Activated B cell treated with CpG ODN at 0.5 μM for 24 hours (primary cell): ENCODE measurements at regions of chr20 and their contacts with region 1.

Region 1: GRCh38 chr20:47886460-47887041 is 101.3 kb upstream of the SULF2 start:
- DNase-seq: no peak
- ATAC-seq: no peak
- H3K4me3 Mint-ChIP-seq: no peak overlapping the region
- H3K27ac Mint-ChIP-seq: no peak overlapping the region
- H3K4me1 Mint-ChIP-seq: no peaks in the 10 kb centered on the region
- H3K27me3 Mint-ChIP-seq: peaks cover 8% of the 10 kb centered on the region
- CTCF ChIP-seq: no peak

Region 2: GRCh38 chr20:47740862-47741184 is 145.7 kb before region 1 on chr20:
- CTCF ChIA-PET with region 1: no interaction called
- POLR2A ChIA-PET with region 1: no interaction called
- intact Hi-C with region 1: no loop called
- DNase-seq: no peak
- ATAC-seq: no peak
- H3K4me3 Mint-ChIP-seq: no peak overlapping the region
- H3K27ac Mint-ChIP-seq: no peak overlapping the region
- H3K4me1 Mint-ChIP-seq: peaks cover 3% of the 10 kb centered on the region
- H3K27me3 Mint-ChIP-seq: peaks cover 14% of the 10 kb centered on the region
- CTCF ChIP-seq: no peak

Region 3: DNA sequence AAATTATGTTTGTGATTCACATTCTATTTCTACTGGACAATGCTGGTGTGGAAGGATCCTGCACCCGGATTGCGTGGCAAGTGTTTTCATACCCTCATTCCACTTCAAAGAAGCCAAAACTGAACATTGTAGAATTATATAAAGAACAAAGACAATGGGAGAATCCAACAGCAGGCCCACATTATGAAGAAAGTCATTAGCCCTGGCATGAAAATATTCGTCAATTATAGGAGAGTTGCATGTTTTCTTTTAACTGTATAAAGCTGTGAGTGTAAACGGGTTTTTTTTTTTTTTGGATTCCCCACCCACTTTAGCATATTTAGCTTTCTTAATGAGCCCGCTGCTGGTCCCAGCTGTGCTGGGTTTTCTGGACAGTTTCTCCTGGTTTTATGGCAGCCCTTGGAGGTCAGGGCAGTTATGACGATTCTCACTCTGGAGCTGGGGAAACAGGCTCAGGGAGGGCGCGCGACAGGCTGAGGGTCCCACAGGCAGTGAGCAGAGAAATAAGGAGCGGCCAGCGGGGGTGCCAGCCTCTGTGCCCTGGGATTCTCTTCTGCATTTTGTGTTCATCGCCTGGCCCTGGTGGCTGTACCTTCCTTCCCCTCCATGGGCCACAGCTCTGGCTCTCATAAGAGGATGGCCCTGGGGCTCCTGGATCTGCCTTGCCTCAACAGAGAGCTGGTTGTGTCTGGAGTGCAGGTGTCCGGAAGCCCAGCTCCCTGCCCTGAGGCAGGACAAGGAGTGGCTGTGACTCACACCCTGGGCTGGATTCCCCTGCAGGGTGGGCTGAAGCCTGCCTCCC is 77.2 kb before region 1 on chr20:
- CTCF ChIA-PET with region 1: no interaction called
- POLR2A ChIA-PET with region 1: no interaction called
- intact Hi-C with region 1: no loop called
- DNase-seq: no peak
- ATAC-seq: no peak
- H3K4me3 Mint-ChIP-seq: no peak overlapping the region
- H3K27ac Mint-ChIP-seq: no peak overlapping the region
- H3K4me1 Mint-ChIP-seq: no peaks in the 10 kb centered on the region
- H3K27me3 Mint-ChIP-seq: peaks cover 38% of the 10 kb centered on the region
- CTCF ChIP-seq: no peak

Region 4: DNA sequence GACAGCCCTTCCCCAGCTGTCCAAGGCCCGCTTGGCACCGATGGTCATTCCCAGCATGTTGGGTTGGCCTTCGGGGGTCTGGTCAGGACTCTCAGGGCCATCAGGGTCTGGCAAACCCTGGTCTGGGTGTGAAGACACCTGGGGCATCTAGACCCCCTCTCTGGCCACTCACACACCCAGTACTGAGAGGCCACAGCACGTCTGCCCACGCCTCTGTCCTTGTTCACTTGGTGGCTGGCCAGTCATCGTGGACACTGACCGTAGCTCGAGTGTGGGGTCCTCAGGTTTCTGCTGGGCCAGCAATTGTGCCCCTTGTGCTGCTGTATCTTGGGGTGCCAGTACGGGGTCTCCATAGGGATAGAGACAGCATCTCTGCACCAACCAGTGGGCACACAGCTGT is 47.4 kb before region 1 on chr20:
- CTCF ChIA-PET with region 1: no interaction called
- POLR2A ChIA-PET with region 1: no interaction called
- intact Hi-C with region 1: loop called (anchors 5 kb)
- DNase-seq: no peak
- ATAC-seq: no peak
- H3K4me3 Mint-ChIP-seq: no peak overlapping the region
- H3K27ac Mint-ChIP-seq: no peak overlapping the region
- H3K4me1 Mint-ChIP-seq: no peaks in the 10 kb centered on the region
- H3K27me3 Mint-ChIP-seq: peaks cover 3% of the 10 kb centered on the region
- CTCF ChIP-seq: no peak

Region 5: DNA sequence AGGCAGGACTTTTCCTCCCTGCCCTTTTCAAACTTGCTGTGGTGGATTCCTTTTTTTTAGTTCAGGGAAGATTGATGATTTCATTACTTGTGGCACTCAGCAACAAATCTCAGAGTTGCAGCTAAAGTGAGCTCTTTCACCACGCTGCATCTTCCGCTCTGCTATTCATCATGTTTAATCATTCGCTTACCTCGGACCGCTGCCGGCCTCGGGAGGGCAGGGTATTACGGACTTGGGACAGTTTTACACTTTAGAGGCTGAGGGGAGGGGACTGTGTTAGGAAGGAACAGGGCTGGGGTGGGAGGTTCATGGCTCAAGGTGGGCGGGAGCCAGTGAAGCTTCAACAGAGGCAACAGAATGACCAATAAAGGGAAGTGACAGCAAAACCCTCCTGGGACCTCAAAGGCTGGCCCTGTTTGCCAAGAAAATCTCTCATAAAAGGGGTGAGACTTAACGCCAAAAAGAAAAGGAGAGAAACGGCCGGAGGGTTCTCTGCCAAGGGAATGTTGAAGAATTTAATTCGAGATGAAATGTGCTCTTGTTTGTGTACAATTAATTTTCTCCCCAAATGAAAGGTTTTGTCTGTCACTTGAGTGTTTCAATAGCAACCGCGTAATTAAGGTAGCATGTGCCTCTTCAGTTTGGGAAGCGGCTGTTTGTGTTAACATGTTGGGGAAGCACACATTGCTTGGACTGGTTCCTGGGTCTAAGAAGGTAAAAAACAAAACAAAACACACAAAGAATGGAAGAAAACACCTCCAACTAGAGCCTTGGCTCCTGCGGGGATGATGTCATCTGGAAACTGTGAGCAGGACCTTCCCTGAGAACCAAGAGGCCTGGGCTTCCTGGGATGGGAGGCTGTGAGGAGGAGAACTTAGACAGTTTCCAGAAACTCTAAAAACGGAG is 28.7 kb before region 1 on chr20:
- CTCF ChIA-PET with region 1: no interaction called
- POLR2A ChIA-PET with region 1: no interaction called
- intact Hi-C with region 1: no loop called
- DNase-seq: no peak
- ATAC-seq: no peak
- H3K4me3 Mint-ChIP-seq: no peak overlapping the region
- H3K27ac Mint-ChIP-seq: no peak overlapping the region
- H3K4me1 Mint-ChIP-seq: peaks cover 13% of the 10 kb centered on the region
- H3K27me3 Mint-ChIP-seq: no peaks in the 10 kb centered on the region
- CTCF ChIP-seq: no peak

Region 6: GRCh38 chr20:47914792-47915191 is 28.2 kb after region 1 on chr20:
- CTCF ChIA-PET with region 1: no interaction called
- POLR2A ChIA-PET with region 1: no interaction called
- intact Hi-C with region 1: no loop called
- DNase-seq: no peak
- ATAC-seq: no peak
- H3K4me3 Mint-ChIP-seq: no peak overlapping the region
- H3K27ac Mint-ChIP-seq: no peak overlapping the region
- H3K4me1 Mint-ChIP-seq: peaks cover 7% of the 10 kb centered on the region
- H3K27me3 Mint-ChIP-seq: peaks cover 11% of the 10 kb centered on the region
- CTCF ChIP-seq: no peak

Region 7: DNA sequence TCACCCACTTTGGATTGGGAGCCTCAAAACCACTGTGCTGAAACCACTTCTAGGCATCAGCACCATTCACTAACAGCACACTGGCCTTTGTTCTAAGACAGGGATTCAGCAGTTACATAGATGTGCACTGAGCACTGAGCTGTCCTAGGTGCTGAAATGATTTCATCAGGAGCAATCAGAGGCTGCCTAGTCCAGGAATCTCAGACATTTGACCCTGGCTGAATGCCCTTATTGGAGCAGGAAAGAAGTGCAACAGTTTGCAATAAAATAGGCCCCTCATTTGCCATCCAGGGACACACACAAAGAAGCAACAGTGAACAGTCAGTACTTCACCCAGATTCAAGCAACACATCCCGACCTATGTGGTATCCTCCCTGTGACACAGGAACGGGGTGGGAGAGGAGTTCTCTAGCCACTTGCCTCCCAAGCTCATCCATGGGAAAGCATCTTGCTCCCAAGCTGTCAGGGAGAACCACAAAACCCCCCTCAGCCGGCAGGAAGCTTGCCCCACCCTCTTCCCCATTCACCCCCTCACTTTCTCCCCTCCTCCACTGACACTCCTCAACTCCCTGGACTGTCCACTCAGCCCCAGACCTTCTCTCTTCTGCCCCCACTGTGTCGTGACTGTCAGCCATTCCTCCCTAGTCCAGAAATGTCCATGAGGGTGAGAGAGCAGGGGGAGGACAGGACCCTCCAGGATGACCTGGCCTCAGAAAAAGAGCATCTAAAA is 636.8 kb after region 1 on chr20:
- CTCF ChIA-PET with region 1: no interaction called
- POLR2A ChIA-PET with region 1: no interaction called
- intact Hi-C with region 1: loop called (anchors 5 kb)
- DNase-seq: no peak
- ATAC-seq: no peak
- H3K4me3 Mint-ChIP-seq: no peak overlapping the region
- H3K27ac Mint-ChIP-seq: no peak overlapping the region
- H3K4me1 Mint-ChIP-seq: no peaks in the 10 kb centered on the region
- H3K27me3 Mint-ChIP-seq: peaks cover 5% of the 10 kb centered on the region
- CTCF ChIP-seq: no peak